CD4-positive, alpha-beta T cell (primary cell): ENCODE measurements at regions of chr5 and their contacts with region 1.

Region 1: GRCh38 chr5:56481428-56482357 is 248.6 kb upstream of the ANKRD55 start:
- DNase-seq: peak in 9 of 14 experiments; percentile 8 to 58 (median 31)
- ATAC-seq: no peak
- H3K4me3 ChIP-seq: peak overlapping the region; percentile 69
- H3K4me3 Mint-ChIP-seq: peak overlapping the region; percentile 94
- H3K27ac ChIP-seq: peak overlapping the region; percentile 80
- H3K27ac Mint-ChIP-seq: peak overlapping the region; percentile 89
- H3K4me1 ChIP-seq: peaks cover 52% of the 10 kb centered on the region
- H3K4me1 Mint-ChIP-seq: peaks cover 49% of the 10 kb centered on the region
- H3K27me3 ChIP-seq: no peaks in the 10 kb centered on the region
- H3K27me3 Mint-ChIP-seq: no peaks in the 10 kb centered on the region
- CTCF ChIP-seq: peak; percentile 46

Region 2: GRCh38 chr5:56211298-56211865 is 270.3 kb before region 1 on chr5:
- CTCF ChIA-PET with region 1: no interaction called
- POLR2A ChIA-PET with region 1: no interaction called
- intact Hi-C with region 1: no loop called
- DNase-seq: no peak
- ATAC-seq: no peak
- H3K4me3 ChIP-seq: no peak overlapping the region
- H3K4me3 Mint-ChIP-seq: no peak overlapping the region
- H3K27ac ChIP-seq: no peak overlapping the region
- H3K27ac Mint-ChIP-seq: no peak overlapping the region
- H3K4me1 ChIP-seq: no peaks in the 10 kb centered on the region
- H3K4me1 Mint-ChIP-seq: no peaks in the 10 kb centered on the region
- H3K27me3 ChIP-seq: no peaks in the 10 kb centered on the region
- H3K27me3 Mint-ChIP-seq: no peaks in the 10 kb centered on the region
- CTCF ChIP-seq: no peak

Region 3: GRCh38 chr5:56588636-56589480 is 107.2 kb after region 1 on chr5:
- CTCF ChIA-PET with region 1: no interaction called
- POLR2A ChIA-PET with region 1: interaction called, 14 read pairs
- intact Hi-C with region 1: loop called in 1 of 2 experiments (anchors 5 kb)
- DNase-seq: peak; percentile 32 to 92 (median 60)
- ATAC-seq: peak; percentile 72
- H3K4me3 ChIP-seq: no peak overlapping the region
- H3K4me3 Mint-ChIP-seq: peak overlapping the region; percentile 52
- H3K27ac ChIP-seq: peak overlapping the region; percentile 60 to 95
- H3K27ac Mint-ChIP-seq: peak overlapping the region; percentile 87
- H3K4me1 ChIP-seq: peaks cover 51% of the 10 kb centered on the region
- H3K4me1 Mint-ChIP-seq: peaks cover 62% of the 10 kb centered on the region
- H3K27me3 ChIP-seq: no peaks in the 10 kb centered on the region
- H3K27me3 Mint-ChIP-seq: no peaks in the 10 kb centered on the region
- CTCF ChIP-seq: no peak

Region 4: DNA sequence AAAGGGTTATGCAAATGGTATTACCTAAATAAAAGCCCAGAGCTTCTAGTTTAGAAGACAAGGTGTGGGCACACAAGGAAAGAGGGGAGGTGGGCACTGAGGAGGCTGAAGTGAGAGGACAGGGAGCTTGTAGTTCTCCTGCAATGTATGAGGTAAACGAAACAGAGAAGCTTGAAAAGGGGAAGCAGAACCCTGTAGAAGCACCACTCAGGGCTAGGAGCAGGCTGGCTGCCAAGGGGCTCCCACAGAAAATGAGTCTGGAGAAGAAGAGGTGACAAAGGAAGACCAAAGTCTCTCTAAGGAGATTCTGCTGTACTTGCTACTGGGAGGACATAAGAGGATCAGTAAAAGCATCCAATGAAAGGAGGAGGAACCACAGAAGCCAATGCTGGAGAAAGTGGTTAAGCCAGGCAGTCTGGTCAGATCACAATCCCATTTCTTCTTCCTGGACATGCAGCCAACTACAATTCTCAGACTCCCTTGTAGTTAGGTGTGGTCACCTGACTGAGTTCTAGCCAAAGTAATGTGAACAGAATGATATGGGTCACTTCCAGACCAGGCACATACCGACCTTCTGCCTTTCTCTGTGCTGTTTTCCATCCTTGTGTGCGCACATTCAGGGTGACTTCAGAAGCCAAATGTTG is 159.2 kb after region 1 on chr5:
- CTCF ChIA-PET with region 1: no interaction called
- POLR2A ChIA-PET with region 1: interaction called, 3 read pairs
- intact Hi-C with region 1: loop called in 1 of 2 experiments (anchors 2 kb)
- DNase-seq: peak in 2 of 14 experiments; percentile 26 to 30
- ATAC-seq: no peak
- H3K4me3 ChIP-seq: no peak overlapping the region
- H3K4me3 Mint-ChIP-seq: no peak overlapping the region
- H3K27ac ChIP-seq: no peak overlapping the region
- H3K27ac Mint-ChIP-seq: peak overlapping the region; percentile 97
- H3K4me1 ChIP-seq: peaks cover 6% of the 10 kb centered on the region
- H3K4me1 Mint-ChIP-seq: peaks cover 52% of the 10 kb centered on the region
- H3K27me3 ChIP-seq: no peaks in the 10 kb centered on the region
- H3K27me3 Mint-ChIP-seq: no peaks in the 10 kb centered on the region
- CTCF ChIP-seq: no peak

Region 5: GRCh38 chr5:56696900-56697299 is 215.2 kb after region 1 on chr5:
- CTCF ChIA-PET with region 1: no interaction called
- POLR2A ChIA-PET with region 1: interaction called, 5 read pairs
- intact Hi-C with region 1: loop called in 1 of 2 experiments (anchors 10 kb)
- DNase-seq: peak in 6 of 14 experiments; percentile 20 to 75 (median 44)
- ATAC-seq: no peak
- H3K4me3 ChIP-seq: no peak overlapping the region
- H3K4me3 Mint-ChIP-seq: peak overlapping the region; percentile 26
- H3K27ac ChIP-seq: no peak overlapping the region
- H3K27ac Mint-ChIP-seq: peak overlapping the region; percentile 78
- H3K4me1 ChIP-seq: peaks cover 74% of the 10 kb centered on the region
- H3K4me1 Mint-ChIP-seq: peaks cover 97% of the 10 kb centered on the region
- H3K27me3 ChIP-seq: no peaks in the 10 kb centered on the region
- H3K27me3 Mint-ChIP-seq: no peaks in the 10 kb centered on the region
- CTCF ChIP-seq: no peak

Region 6: DNA sequence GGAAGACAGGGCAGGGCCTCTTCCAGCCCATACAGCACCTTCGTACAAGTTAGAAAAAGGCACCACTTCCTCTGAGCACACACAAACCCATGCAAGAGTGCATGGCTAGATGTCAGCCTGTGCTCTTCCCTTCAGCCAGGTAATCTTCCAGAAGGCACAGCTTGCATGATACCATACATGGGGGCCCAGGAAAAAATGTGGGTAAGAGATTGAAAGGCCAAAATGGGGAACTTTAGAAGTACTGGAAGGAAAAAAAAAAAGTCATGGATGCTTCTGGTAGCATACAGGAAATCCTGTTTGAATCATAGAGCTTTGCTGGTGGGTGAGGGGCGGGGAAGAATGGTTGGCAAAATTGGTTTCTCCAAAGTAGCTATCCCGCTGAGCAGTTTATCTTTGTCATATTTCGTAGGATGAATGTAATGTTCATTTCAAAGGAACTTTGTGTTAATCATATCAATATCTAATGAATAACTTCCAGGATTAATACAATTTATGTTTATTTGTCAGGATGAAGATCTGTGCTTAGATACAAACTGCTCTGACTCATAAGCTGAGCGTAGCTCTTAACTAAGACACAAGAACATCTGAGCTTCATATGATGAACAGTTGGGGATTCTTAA is 255.4 kb after region 1 on chr5:
- CTCF ChIA-PET with region 1: no interaction called
- POLR2A ChIA-PET with region 1: interaction called, 10 read pairs
- intact Hi-C with region 1: no loop called
- DNase-seq: peak in 5 of 14 experiments; percentile 3 to 41 (median 35)
- ATAC-seq: peak; percentile 45
- H3K4me3 ChIP-seq: no peak overlapping the region
- H3K4me3 Mint-ChIP-seq: peak overlapping the region; percentile 78
- H3K27ac ChIP-seq: peak overlapping the region; percentile 55 to 76
- H3K27ac Mint-ChIP-seq: peak overlapping the region; percentile 86
- H3K4me1 ChIP-seq: peaks cover 48% of the 10 kb centered on the region
- H3K4me1 Mint-ChIP-seq: peaks cover 59% of the 10 kb centered on the region
- H3K27me3 ChIP-seq: no peaks in the 10 kb centered on the region
- H3K27me3 Mint-ChIP-seq: no peaks in the 10 kb centered on the region
- CTCF ChIP-seq: no peak